Gastrocnemius medialis (tissue), 4 donors: ENCODE measurements at regions of chr6 and their contacts with region 1.

Region 1: DNA sequence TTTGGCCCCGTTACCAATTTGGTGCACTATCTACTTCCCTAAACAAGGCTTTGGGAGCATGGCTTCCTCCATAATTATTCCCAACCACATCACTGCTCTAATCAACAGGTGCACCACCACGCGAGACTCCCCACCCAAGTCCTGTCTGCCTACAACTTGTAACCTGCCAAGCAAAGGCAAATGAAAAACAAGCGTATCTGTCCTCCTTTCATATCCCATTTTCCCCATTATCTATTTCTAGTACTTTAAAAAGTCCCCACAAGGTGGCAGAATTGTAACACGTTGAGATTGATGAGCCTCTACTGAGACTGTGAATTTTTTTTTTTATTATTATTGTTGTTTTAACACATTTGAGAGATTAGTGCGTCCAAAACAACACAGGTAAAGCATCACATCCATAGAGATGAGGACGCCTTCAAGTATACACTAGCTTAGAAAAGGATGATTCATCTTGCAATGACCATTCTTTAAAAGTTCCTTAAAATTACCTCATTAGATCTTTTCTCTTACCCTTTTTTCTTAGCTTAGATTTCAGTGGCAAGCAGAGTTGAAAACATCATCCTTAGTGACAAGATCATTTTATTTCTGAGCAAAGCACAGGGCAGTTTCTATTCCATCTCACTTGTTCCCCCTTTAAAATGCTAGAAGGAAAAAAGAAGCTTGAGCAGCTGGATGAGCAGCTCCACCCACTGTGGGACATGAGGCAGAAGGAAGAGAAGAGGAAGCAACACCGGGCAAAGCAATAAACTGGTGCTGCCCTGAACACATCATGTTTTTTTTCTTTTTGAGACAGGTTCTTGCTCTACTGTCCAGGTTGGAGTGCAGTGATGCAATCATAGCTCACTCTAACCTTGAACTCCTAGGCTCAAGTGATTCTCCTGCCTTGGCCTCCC is 210.8 kb downstream of the ARHGAP18 start:
- DNase-seq: no peak
- ATAC-seq: peak; percentile 38 to 50
- H3K4me3 ChIP-seq: no peak overlapping the region
- H3K27ac ChIP-seq: peak overlapping the region in 2 of 4 donors; percentile 10 to 86
- H3K4me1 ChIP-seq: peaks cover 41 to 53% of the 10 kb centered on the region in 2 donors
- H3K27me3 ChIP-seq: no peaks in the 10 kb centered on the region
- CTCF ChIP-seq: peak; percentile 41 to 73 (median 59)
- POLR2A ChIP-seq: no peak

Region 2: GRCh38 chr6:129203190-129203900 is 295.9 kb before region 1 on chr6:
- in situ Hi-C with region 1: no loop called
- intact Hi-C with region 1: no loop called
- DNase-seq: no peak
- ATAC-seq: no peak
- H3K4me3 ChIP-seq: no peak overlapping the region
- H3K27ac ChIP-seq: no peak overlapping the region
- H3K4me1 ChIP-seq: peaks cover 3 to 5% of the 10 kb centered on the region in 2 donors
- H3K27me3 ChIP-seq: no peaks in the 10 kb centered on the region
- CTCF ChIP-seq: no peak
- POLR2A ChIP-seq: no peak

Region 3: GRCh38 chr6:129515752-129516413 is 16.7 kb after region 1 on chr6:
- in situ Hi-C with region 1: no loop called
- intact Hi-C with region 1: loop called (anchors 2 kb)
- DNase-seq: no peak
- ATAC-seq: no peak
- H3K4me3 ChIP-seq: no peak overlapping the region
- H3K27ac ChIP-seq: no peak overlapping the region
- H3K4me1 ChIP-seq: peaks cover 8 to 12% of the 10 kb centered on the region in 2 donors
- H3K27me3 ChIP-seq: no peaks in the 10 kb centered on the region
- CTCF ChIP-seq: no peak
- POLR2A ChIP-seq: no peak

Region 4: DNA sequence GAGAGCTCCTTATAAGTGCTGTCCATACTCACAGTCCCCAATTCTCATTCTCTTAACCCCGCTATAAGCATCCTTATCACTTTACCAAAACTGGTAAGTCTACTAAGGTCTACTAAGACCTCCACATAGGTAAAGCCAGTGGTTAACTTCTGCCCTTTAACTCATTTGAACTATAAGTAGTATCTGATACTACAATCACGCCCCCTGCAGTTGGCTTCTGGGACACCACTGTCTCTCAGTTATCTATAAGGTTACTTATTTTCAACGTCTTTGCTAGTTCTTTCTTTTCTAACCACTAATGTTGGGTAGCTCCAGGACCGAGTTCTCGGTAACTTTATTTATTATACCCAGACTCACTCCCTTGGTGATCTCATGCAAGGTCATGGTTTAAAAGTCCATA is 68.2 kb after region 1 on chr6:
- in situ Hi-C with region 1: loop called in 3 of 4 experiments (anchors 5 to 10 kb)
- intact Hi-C with region 1: no loop called
- DNase-seq: no peak
- ATAC-seq: no peak
- H3K4me3 ChIP-seq: no peak overlapping the region
- H3K27ac ChIP-seq: no peak overlapping the region
- H3K4me1 ChIP-seq: no peaks in the 10 kb centered on the region
- H3K27me3 ChIP-seq: no peaks in the 10 kb centered on the region
- CTCF ChIP-seq: peak in 3 of 5 experiments; percentile 14 to 33 (median 21)
- POLR2A ChIP-seq: no peak

Region 5: GRCh38 chr6:129575378-129576118 is 76.4 kb after region 1 on chr6:
- in situ Hi-C with region 1: loop called in 2 of 4 experiments (anchors 5 to 10 kb)
- intact Hi-C with region 1: loop called (anchors 1 kb)
- DNase-seq: no peak
- ATAC-seq: peak; percentile 62 to 78
- H3K4me3 ChIP-seq: peak overlapping the region in 3 of 4 donors; percentile 31 to 49 (median 37)
- H3K27ac ChIP-seq: no peak overlapping the region
- H3K4me1 ChIP-seq: no peaks in the 10 kb centered on the region
- H3K27me3 ChIP-seq: no peaks in the 10 kb centered on the region
- CTCF ChIP-seq: peak; percentile 52 to 71 (median 59)
- POLR2A ChIP-seq: no peak

Region 6: GRCh38 chr6:129748212-129748900 is 249.2 kb after region 1 on chr6:
- in situ Hi-C with region 1: loop called in 2 of 4 experiments (anchors 25 kb)
- intact Hi-C with region 1: no loop called
- DNase-seq: peak; percentile 10 to 50
- ATAC-seq: peak in 1 of 2 donors; percentile 68
- H3K4me3 ChIP-seq: no peak overlapping the region
- H3K27ac ChIP-seq: peak overlapping the region; percentile 46 to 72 (median 62)
- H3K4me1 ChIP-seq: peaks cover 26 to 36% of the 10 kb centered on the region in 2 donors
- H3K27me3 ChIP-seq: no peaks in the 10 kb centered on the region
- CTCF ChIP-seq: peak in 2 of 5 experiments; percentile 23 to 33
- POLR2A ChIP-seq: no peak